Heart left ventricle (tissue), 16 donors: ENCODE measurements at regions of chr9 and their contacts with region 1.

Region 1: DNA sequence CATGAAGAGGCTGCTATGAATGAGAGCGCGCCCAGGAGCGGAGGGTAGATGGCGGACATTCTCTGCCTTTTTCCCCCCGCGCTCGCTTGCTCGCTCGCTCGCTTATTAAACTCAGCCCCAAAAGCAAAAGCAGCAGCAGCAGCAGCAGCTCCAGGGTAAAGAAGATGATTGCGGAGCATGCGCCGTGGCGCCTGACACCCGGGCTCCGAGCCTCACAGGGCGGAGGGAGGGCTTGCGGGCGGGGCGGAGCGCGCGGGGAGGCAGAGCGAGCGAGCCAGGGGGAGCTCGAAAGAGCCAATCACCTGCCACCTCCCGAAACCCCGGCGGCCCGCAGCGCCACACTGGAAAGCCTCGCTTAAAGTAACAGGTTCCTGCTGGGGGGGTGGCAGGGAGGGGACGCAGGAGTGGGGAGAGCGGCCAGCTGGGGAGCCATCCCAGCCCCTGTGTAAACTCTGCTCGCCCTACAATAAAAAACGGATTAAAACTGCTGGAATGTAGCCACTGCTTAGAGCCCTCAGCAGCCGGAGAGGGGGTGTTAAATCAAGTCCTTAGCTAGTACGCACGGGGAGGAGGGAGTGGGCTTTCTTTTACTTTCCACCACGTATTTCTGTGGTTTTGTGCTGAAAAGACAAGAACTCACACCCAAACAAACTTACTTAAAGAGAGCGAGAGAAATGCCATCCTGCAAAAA is at the start of gene MLLT3:
- DNase-seq: peak; percentile 96 to 99 (median 97)
- ATAC-seq: peak; percentile 95 to 98 (median 96)
- H3K4me3 ChIP-seq: peak within 1 kb of the TSS; percentile 69 to 95 (median 90)
- H3K27ac ChIP-seq: peak within 1 kb of the TSS; percentile 77 to 94 (median 88)
- H3K4me1 ChIP-seq: peaks cover 0 to 41% (median 26%) of the 10 kb centered on the region in 12 donors
- H3K27me3 ChIP-seq: no peaks in the 10 kb centered on the region
- CTCF ChIP-seq: peak in 4 of 12 donors; percentile 20 to 48 (median 36)
- POLR2A ChIP-seq: peak in 1 of 2 donors; percentile 73
- total RNA-seq, gene MLLT3: 10.8 to 21.0 (median 16.5) TPM

Region 2: GRCh38 chr9:20043035-20043434 is 579.4 kb before region 1 on chr9:
- intact Hi-C with region 1: loop called in 1 of 10 experiments (anchors 5 kb)
- DNase-seq: no peak
- ATAC-seq: no peak
- H3K4me3 ChIP-seq: peak overlapping the region in 1 of 12 donors; percentile 10
- H3K27ac ChIP-seq: no peak overlapping the region
- H3K4me1 ChIP-seq: peaks cover 0 to 18% (median 7%) of the 10 kb centered on the region in 12 donors
- H3K27me3 ChIP-seq: no peaks in the 10 kb centered on the region
- CTCF ChIP-seq: no peak
- POLR2A ChIP-seq: no peak

Region 3: GRCh38 chr9:20407012-20407411 is 215.5 kb before region 1 on chr9:
- intact Hi-C with region 1: no loop called
- DNase-seq: no peak
- ATAC-seq: no peak
- H3K4me3 ChIP-seq: no peak overlapping the region
- H3K27ac ChIP-seq: no peak overlapping the region
- H3K4me1 ChIP-seq: peaks cover 0 to 9% (median 0%) of the 10 kb centered on the region in 12 donors
- H3K27me3 ChIP-seq: no peaks in the 10 kb centered on the region
- CTCF ChIP-seq: peak in 2 of 12 donors; percentile 7 to 11
- POLR2A ChIP-seq: no peak

Region 4: DNA sequence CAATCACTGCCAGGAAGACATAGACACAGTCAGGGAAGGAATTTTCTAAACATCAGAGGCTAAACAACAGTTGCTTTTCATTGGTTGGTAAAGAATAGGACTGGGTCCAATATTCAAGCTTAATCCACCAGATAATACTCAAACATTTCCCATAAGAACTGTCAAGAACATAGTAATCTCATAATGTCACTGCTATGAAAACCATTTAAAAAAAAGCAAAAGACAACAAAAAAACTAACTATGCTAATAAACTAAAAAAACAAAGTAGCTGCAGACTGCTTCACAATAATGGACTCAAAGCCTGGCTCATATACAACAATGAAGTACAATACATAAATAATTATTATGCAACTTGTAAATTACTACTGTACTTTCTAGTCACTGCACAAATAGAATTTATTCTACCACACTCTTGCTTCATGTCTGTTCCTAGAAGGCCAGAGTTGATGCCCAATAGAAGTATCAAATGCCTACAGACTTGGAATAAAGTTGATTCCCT is 148.9 kb before region 1 on chr9:
- intact Hi-C with region 1: loop called in 2 of 10 experiments (anchors 5 kb)
- DNase-seq: no peak
- ATAC-seq: no peak
- H3K4me3 ChIP-seq: no peak overlapping the region
- H3K27ac ChIP-seq: no peak overlapping the region
- H3K4me1 ChIP-seq: peaks cover 0 to 60% (median 36%) of the 10 kb centered on the region in 12 donors
- H3K27me3 ChIP-seq: no peaks in the 10 kb centered on the region
- CTCF ChIP-seq: no peak
- POLR2A ChIP-seq: no peak

Region 5: GRCh38 chr9:20558566-20559016 is 63.9 kb before region 1 on chr9:
- intact Hi-C with region 1: loop called in 5 of 10 experiments (anchors 2 to 10 kb)
- DNase-seq: no peak
- ATAC-seq: peak in 1 of 4 donors; percentile 49
- H3K4me3 ChIP-seq: no peak overlapping the region
- H3K27ac ChIP-seq: no peak overlapping the region
- H3K4me1 ChIP-seq: peaks cover 0 to 50% (median 25%) of the 10 kb centered on the region in 12 donors
- H3K27me3 ChIP-seq: no peaks in the 10 kb centered on the region
- CTCF ChIP-seq: no peak
- POLR2A ChIP-seq: no peak

Region 6: GRCh38 chr9:20701060-20701459 is 78.6 kb after region 1 on chr9:
- intact Hi-C with region 1: loop called in 1 of 10 experiments (anchors 5 kb)
- DNase-seq: no peak
- ATAC-seq: peak; percentile 29 to 73 (median 59)
- H3K4me3 ChIP-seq: no peak overlapping the region
- H3K27ac ChIP-seq: peak overlapping the region in 6 of 12 donors; percentile 9 to 54 (median 16)
- H3K4me1 ChIP-seq: peaks cover 0 to 23% (median 14%) of the 10 kb centered on the region in 12 donors
- H3K27me3 ChIP-seq: no peaks in the 10 kb centered on the region
- CTCF ChIP-seq: no peak
- POLR2A ChIP-seq: no peak

Region 7: DNA sequence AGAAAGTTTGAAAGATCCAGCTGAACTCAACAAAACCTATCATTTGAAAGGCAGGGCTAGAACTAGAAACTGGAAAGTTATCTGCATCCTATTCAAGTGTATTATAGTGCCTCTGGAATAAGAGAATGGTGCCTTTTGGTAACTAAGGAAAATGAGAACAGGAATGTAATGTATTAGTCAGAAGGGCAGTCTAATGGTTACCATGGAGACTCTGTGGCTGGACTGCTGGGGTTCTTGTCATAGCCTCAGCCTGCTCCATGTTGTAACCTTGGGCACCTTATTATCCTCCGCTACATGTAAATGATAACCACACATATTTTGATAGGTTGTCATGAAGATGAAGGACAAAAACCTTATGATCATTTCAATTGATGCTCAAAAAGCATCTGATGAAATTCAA is 479.8 kb after region 1 on chr9:
- intact Hi-C with region 1: loop called in 3 of 10 experiments (anchors 5 to 10 kb)
- DNase-seq: no peak
- ATAC-seq: no peak
- H3K4me3 ChIP-seq: no peak overlapping the region
- H3K27ac ChIP-seq: no peak overlapping the region
- H3K4me1 ChIP-seq: peaks cover 0 to 19% (median under 1%) of the 10 kb centered on the region in 12 donors
- H3K27me3 ChIP-seq: no peaks in the 10 kb centered on the region
- CTCF ChIP-seq: no peak
- POLR2A ChIP-seq: no peak